ENCODE measurements at regions of chr4 and their contacts with region 1.

Region 1: GRCh38 chr4:70839589-70840093 is at the start of gene GRSF1:
- DNase-seq: peak; percentile 88 to 99 (median 92)

Region 2: DNA sequence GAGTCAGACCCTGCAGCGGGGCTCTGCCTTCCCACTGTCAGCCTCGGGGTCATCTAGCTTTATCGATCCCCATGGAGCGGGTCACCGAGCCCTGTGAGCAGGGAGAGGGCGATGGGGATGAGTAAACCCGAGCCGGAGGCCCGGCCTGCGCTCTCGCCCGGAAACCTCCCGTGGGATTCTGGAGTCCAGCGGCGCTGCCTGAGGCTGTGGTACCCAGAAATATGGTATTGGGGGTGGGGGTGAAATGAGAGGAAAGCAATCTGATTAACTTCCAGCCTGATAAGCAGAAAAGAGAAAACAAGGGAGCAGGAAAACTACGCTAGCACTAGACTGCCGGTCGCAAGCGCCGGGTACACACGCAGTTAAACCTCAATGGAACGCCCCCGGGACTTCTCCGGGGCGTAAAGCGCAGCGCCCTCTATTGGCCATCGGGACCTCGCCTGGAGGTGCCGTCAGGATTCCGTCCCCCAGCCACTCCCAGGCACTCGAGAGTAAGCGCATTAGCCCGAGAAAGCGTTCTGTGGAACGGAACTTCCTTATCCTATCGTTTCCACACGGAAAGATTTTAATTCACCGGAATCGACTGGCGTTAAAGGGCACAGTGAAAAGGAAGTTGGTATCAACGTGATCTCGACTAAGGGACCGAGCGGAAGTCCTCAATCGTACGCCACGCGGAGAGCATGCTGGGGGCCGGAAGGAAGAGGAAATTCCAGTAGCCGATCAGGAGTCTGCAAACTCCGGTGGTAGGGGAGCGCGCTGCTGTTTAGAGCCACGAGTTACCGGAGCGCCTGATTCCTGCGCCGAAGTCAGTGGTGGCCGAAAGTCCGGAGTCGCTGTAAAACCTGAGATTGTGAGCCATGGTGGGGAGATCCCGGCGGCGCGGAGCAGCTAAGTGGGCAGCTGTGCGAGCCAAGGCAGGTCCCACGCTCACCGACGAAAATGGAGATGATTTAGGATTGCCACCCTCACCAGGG is 151.5 kb before region 1 on chr4 and contains the start of gene UTP3:
- intact Hi-C with region 1: loop called (anchors 10 kb)
- DNase-seq: peak; percentile 91 to 99 (median 94)

Region 3: DNA sequence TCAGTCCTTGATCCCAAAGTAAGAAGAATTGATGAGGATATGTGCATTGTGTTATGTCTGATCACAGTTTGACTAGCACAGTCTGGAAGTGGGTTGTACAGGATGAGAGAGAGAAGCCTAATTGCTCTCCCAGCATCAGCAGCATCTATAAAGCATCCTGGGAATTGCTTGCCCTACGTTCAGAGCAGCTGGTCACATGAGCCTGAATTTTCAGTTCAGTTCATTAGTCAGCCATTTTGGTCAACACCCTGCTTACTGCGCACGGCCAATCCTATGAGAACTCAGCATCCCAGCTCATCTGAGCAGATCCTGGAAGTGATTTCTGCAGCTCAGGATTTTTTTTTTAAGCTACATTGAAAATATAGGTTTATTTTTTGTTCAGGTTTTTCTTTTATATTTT is 117.9 kb before region 1 on chr4 and contains the start of gene RUFY3:
- intact Hi-C with region 1: loop called (anchors 5 kb)
- DNase-seq: peak; percentile 56 to 95 (median 72)

Region 4: GRCh38 chr4:70901984-70902576 is 62.4 kb after region 1 on chr4 and contains the start of gene MOB1B:
- intact Hi-C with region 1: loop called (anchors 5 kb)
- DNase-seq: peak; percentile 74 to 98 (median 86)

Region 5: GRCh38 chr4:70993181-70994068 is 153.8 kb after region 1 on chr4 and contains the start of gene DCK:
- intact Hi-C with region 1: loop called (anchors 1 kb)
- DNase-seq: peak; percentile 75 to 98 (median 86)

Measured in posterior cingulate gyrus (tissue), 11 donors.